Motor neuron (in vitro differentiated cells): ENCODE measurements at regions of chr11 and their contacts with region 1.

Region 1: GRCh38 chr11:88016392-88017170 is 158.7 kb downstream of the RAB38 start:
- ATAC-seq: peak in 7 of 8 experiments; percentile 50 to 94 (median 75)
- H3K4me3 ChIP-seq: no peak overlapping the region
- H3K27ac ChIP-seq: no peak overlapping the region
- H3K4me1 ChIP-seq: peaks cover 0 to 12% of the 10 kb centered on the region in 2 donors

Region 2: DNA sequence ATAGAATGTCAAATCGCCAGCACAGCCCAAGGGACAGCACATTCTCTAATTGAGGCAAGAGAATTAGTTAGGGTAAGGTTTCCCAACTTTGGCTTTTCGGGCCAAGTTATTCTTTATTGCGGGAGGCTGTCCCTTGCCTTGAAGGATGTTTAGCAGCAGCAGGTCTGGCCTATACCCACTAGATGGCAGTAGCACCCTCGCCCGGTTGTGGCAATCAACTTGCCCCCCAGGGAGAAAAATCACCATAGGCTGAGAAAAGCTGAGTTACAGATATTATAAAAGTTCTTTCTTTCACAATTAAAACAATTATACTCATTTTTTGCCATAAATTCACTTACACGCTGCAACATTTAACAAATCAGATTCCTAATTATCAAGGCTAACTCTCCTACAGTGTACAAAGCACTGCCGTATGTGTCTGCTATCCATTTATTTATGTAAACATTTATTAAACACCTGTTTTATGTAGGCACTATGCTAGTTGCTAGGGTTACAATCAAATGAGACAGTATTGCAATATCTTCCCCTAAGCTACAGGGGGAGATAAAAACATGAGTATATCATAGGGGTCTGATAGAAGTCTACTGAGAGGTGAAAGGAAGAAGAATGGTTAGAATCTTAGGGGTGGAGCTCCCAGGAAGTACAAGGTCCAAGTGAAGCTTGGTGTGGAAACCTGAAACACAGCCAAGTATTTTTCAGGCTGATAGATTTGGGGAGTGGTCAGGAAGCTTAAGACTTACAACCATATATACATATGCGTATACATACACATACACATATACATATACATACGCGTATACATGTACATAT is 293.6 kb before region 1 on chr11:
- in situ Hi-C with region 1: loop called in 1 of 9 experiments (anchors 25 kb)
- ATAC-seq: peak in 3 of 8 experiments; percentile 48 to 54 (median 52)
- H3K4me3 ChIP-seq: no peak overlapping the region
- H3K27ac ChIP-seq: no peak overlapping the region
- H3K4me1 ChIP-seq: no peaks in the 10 kb centered on the region

Region 3: GRCh38 chr11:88103337-88104206 is 87.0 kb after region 1 on chr11:
- in situ Hi-C with region 1: no loop called
- ATAC-seq: peak in 3 of 8 experiments; percentile 33 to 83 (median 34)
- H3K4me3 ChIP-seq: no peak overlapping the region
- H3K27ac ChIP-seq: no peak overlapping the region
- H3K4me1 ChIP-seq: peaks cover 9 to 21% of the 10 kb centered on the region in 2 donors

Region 4: GRCh38 chr11:88292171-88292843 is 275.7 kb after region 1 on chr11:
- in situ Hi-C with region 1: loop called in 1 of 9 experiments (anchors 25 kb)
- ATAC-seq: peak in 3 of 8 experiments; percentile 45 to 91 (median 69)
- H3K4me3 ChIP-seq: no peak overlapping the region
- H3K27ac ChIP-seq: no peak overlapping the region
- H3K4me1 ChIP-seq: peaks cover 3 to 7% of the 10 kb centered on the region in 2 donors